ENCODE measurements at regions of chr1 and their contacts with region 1.

Region 1: GRCh38 chr1:211469938-211470529 is 21.9 kb downstream of the RD3 start:
- DNase-seq: peak; percentile 53
- CTCF ChIP-seq: peak; percentile 73

Region 2: DNA sequence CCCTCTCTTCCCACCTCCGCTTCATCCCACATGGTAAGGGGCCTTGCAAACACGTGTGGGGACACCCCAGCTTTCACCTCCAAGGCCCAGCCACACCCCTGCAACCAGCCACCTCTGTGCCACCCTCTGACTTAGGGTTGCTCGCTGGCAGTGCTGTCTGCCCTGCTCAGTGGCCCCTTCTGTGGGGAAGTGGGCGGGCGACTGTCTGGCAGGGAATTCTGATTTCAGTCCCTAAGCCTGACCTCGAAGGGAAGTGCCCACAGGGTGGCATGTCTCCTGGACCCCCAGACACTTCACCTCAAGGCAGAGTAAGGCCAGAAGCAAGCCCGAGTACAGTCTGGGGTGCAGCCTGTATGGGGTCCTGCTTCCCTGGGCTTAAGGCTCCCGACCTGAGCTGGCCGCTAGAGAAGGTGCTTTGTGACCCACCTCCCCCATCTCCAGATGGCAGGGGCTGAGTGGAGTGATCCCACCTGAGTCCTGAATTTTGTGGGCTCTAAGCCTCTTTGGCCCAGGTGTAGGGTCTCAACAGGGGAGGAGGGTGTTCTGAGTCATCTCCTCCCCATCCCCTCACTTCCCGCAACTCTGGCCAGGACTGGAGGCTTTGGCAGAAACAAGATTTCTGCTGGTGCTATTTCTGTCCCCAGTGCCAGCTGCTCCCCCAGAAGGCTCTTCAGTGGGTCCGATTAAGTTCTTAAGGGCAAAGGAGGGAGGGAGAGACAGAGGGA is 14.9 kb after region 1 on chr1:
- CTCF ChIA-PET with region 1: interaction called, 56 read pairs
- POLR2A ChIA-PET with region 1: no interaction called
- DNase-seq: no peak
- CTCF ChIP-seq: no peak

Region 3: DNA sequence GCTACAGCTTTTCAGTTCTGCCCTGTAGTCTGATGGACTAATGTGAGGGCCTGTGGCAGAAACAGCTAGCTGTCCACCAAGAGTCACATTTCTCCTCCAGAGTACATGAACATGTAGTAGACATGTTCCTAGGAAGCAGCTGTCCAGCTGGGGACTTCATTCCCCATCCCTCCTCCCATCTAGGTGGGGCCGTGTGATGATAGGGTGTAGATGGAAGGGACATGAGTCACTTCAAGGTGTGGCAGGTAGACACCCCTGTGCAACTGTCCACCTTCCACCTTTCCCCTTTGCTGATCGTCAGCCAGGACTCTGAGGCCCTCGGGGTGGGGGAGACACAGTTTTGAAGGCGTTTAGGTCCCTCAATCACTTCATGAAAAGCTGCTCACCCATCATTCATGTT is 25.6 kb after region 1 on chr1:
- CTCF ChIA-PET with region 1: interaction called, 13 read pairs
- POLR2A ChIA-PET with region 1: no interaction called
- DNase-seq: no peak
- CTCF ChIP-seq: no peak

Region 4: GRCh38 chr1:211578640-211579433 is 108.8 kb after region 1 on chr1 and contains the start of gene SLC30A1:
- CTCF ChIA-PET with region 1: no interaction called
- POLR2A ChIA-PET with region 1: no interaction called
- DNase-seq: peak; percentile 100
- CTCF ChIP-seq: no peak